Activated CD8-positive, alpha-beta memory T cell treated with anti-CD3 and anti-CD28 coated beads, Interleukin-2, amount 10 ng/mL, durations not matched to agents 7 days and 5 days (primary cell): ENCODE measurements at regions of chr17 and their contacts with region 1.

Region 1: GRCh38 chr17:2054512-2055291 is at the start of gene HIC1:
- DNase-seq: peak; percentile 87
- ATAC-seq: peak; percentile 51
- H3K4me3 Mint-ChIP-seq: peak within 1 kb of the TSS; percentile 78
- H3K27ac Mint-ChIP-seq: peak within 1 kb of the TSS; percentile 86
- H3K4me1 Mint-ChIP-seq: peaks cover 26% of the 10 kb centered on the region
- H3K27me3 Mint-ChIP-seq: peaks cover 11% of the 10 kb centered on the region
- total RNA-seq, gene HIC1: 88.5 to 122 TPM

Region 2: DNA sequence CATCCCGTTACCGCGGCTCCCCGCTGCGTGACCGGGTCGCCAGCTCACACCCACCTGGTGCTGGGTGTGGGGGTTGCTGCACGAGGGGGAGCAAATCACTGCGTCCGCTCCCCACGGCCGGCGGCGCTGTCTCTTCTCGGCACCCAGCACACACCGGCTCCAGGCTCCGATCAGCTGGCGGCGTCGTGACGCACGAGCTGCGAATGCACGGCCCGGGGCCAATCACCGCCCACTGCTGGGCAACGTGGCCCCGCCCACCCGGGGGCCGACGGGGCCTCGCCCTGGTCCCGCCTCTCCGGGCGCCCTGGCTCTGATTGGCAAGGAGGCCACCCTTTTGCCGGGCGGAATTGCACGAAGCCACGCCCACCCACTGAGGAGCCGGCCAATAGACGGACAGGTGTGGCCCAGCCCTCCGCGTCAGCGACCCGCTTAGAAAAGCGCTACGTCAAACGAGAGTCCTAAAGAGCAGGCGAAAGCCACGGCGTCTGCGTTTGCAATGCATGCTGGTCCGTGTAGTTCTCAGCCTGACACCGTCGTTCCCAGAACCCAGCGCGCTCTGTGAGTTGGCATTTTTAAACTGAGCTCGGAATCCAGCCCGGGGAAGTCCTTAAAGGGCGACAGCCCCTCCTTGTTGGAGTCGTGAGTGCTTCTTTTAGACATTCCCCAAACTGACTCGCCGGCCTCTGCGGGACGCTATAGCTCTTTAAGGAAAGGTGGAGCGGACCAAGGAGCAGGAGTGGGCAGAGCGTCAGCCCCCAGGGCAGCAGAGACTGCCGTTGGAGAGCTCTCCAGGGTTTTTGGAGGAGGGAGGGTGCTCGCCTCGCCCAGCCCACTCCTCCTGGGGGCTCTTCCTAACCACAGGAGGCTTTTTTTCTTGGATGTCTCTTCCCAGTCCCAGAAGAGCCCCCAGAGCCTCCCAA is 338.4 kb before region 1 on chr17:
- CTCF ChIA-PET with region 1: interaction called, 11 read pairs
- DNase-seq: peak; percentile 100
- ATAC-seq: peak; percentile 85
- H3K4me3 Mint-ChIP-seq: peak overlapping the region; percentile 89
- H3K27ac Mint-ChIP-seq: peak overlapping the region; percentile 99
- H3K4me1 Mint-ChIP-seq: peaks cover 23% of the 10 kb centered on the region
- H3K27me3 Mint-ChIP-seq: peaks cover 7% of the 10 kb centered on the region

Region 3: GRCh38 chr17:1931759-1932579 is 122.7 kb before region 1 on chr17:
- CTCF ChIA-PET with region 1: no interaction called
- DNase-seq: no peak
- ATAC-seq: no peak
- H3K4me3 Mint-ChIP-seq: no peak overlapping the region
- H3K27ac Mint-ChIP-seq: no peak overlapping the region
- H3K4me1 Mint-ChIP-seq: no peaks in the 10 kb centered on the region
- H3K27me3 Mint-ChIP-seq: no peaks in the 10 kb centered on the region

Region 4: DNA sequence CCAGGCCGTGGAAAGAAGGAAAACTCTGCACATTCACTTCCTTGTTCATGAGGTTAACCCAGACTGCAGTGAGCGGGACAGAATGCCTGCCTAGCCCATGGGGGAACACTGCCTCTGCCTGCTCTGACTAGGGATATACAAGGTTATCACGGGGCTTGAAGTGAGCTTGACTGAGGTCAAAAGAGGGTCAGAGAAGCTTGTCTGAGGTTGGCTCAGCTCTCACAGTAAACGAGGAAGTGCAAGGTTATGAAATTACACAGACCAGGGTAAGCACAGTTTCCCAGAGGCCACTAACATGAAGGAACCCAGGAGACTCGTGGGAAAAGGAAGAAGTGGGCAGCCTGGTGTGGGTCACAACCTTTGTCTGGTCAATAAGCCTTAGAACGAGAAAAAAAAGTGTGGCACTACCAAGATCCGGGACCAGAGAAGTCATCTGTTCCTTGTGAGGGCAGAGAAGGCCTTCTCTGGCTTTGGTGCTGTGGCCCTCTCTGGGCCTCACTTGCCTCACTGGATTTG is 29.0 kb after region 1 on chr17:
- CTCF ChIA-PET with region 1: interaction called, 96 read pairs
- DNase-seq: peak; percentile 63
- ATAC-seq: peak; percentile 37
- H3K4me3 Mint-ChIP-seq: no peak overlapping the region
- H3K27ac Mint-ChIP-seq: peak overlapping the region; percentile 64
- H3K4me1 Mint-ChIP-seq: peaks cover 81% of the 10 kb centered on the region
- H3K27me3 Mint-ChIP-seq: no peaks in the 10 kb centered on the region

Region 5: GRCh38 chr17:2215616-2216364 is 161.1 kb after region 1 on chr17:
- CTCF ChIA-PET with region 1: interaction called, 32 read pairs
- DNase-seq: peak; percentile 89
- ATAC-seq: peak; percentile 99
- H3K4me3 Mint-ChIP-seq: peak overlapping the region; percentile 63
- H3K27ac Mint-ChIP-seq: peak overlapping the region; percentile 89
- H3K4me1 Mint-ChIP-seq: peaks cover 66% of the 10 kb centered on the region
- H3K27me3 Mint-ChIP-seq: no peaks in the 10 kb centered on the region

Region 6: DNA sequence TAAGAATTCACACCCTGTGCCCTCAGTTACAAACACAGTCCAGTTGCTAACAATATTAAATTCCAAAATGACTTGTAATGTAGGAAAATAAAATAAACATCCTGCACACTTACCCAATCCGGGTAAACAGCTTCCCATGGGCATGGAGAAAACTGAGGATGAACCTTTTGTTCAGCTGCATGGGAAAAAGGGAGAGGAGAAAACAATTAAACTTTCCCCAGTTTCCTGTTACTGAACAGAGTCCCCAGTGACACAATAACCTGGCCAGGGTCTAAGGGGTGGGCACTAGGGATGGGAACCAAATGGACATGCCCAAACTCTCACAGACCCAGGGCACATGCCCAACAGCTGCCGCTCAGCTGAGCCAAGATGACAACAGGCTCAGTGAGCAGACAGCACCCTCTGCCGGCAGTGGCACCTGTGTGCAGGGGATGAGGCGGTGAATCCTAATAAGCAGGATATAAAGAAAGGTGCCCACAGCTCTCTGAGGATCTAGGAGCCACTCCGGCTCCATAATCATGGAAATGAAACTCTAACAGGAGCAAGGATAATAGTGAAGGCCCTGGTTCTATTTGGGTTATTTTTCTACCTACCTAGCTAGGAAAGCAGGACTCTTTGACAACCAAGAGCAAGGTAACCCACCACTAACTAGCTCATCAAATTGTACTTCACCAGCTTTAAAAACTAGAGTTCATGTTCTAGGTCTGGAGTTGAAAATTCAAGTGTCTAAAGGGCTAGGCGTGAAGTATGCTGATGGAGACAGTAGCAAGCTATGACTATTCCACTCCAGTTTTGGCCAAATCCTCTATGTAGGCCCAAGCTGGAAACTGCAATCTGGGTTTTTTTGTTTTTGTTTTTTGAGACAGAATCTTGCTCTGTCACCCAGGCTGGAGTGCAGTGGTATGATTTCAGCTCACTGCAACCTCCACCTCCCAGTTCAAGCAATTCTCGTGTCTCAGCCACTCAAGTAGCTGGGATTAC is 190.1 kb after region 1 on chr17:
- CTCF ChIA-PET with region 1: interaction called, 401 read pairs
- DNase-seq: peak; percentile 91
- ATAC-seq: peak; percentile 82
- H3K4me3 Mint-ChIP-seq: no peak overlapping the region
- H3K27ac Mint-ChIP-seq: peak overlapping the region; percentile 82
- H3K4me1 Mint-ChIP-seq: peaks cover 82% of the 10 kb centered on the region
- H3K27me3 Mint-ChIP-seq: no peaks in the 10 kb centered on the region

Region 7: GRCh38 chr17:2282297-2282873 is 227.7 kb after region 1 on chr17:
- CTCF ChIA-PET with region 1: interaction called, 123 read pairs
- DNase-seq: no peak
- ATAC-seq: peak; percentile 39
- H3K4me3 Mint-ChIP-seq: no peak overlapping the region
- H3K27ac Mint-ChIP-seq: peak overlapping the region; percentile 72
- H3K4me1 Mint-ChIP-seq: peaks cover 38% of the 10 kb centered on the region
- H3K27me3 Mint-ChIP-seq: no peaks in the 10 kb centered on the region